PC-9 (cell line): ENCODE measurements at regions of chr11 and their contacts with region 1.

Region 1: GRCh38 chr11:107252429-107253161 is 205.0 kb downstream of the CWF19L2 start:
- DNase-seq: no peak
- H3K4me3 ChIP-seq: no peak overlapping the region
- H3K27ac ChIP-seq: no peak overlapping the region
- H3K4me1 ChIP-seq: no peaks in the 10 kb centered on the region
- H3K27me3 ChIP-seq: no peaks in the 10 kb centered on the region
- CTCF ChIP-seq: no peak

Region 2: GRCh38 chr11:107011977-107012376 is 240.6 kb before region 1 on chr11:
- CTCF ChIA-PET with region 1: no interaction called
- POLR2A ChIA-PET with region 1: no interaction called
- intact Hi-C with region 1: no loop called
- DNase-seq: no peak
- H3K4me3 ChIP-seq: no peak overlapping the region
- H3K27ac ChIP-seq: no peak overlapping the region
- H3K4me1 ChIP-seq: peaks cover 17% of the 10 kb centered on the region
- H3K27me3 ChIP-seq: peaks cover 7% of the 10 kb centered on the region; the same call in 1 of the 2 replicates
- CTCF ChIP-seq: no peak

Region 3: DNA sequence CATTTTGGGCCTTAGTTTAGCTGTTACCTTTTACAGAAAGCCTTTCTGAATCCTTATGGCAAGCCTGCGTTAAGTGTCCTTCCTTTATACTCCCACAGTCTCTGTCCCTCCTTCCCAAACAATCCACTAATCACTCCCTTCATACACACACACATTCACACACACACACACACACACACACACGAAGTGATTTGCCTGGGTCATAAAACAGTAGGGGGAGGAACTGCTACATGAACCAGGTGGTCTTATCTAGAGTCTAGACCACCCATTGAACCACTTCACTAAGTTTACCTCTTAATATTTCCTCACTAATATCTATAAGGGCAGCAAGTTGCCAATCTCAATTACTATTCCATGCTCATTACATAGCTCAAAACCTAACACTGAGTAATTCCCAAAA is 37.6 kb before region 1 on chr11:
- CTCF ChIA-PET with region 1: no interaction called
- POLR2A ChIA-PET with region 1: no interaction called
- intact Hi-C with region 1: no loop called
- DNase-seq: no peak
- H3K4me3 ChIP-seq: no peak overlapping the region
- H3K27ac ChIP-seq: no peak overlapping the region
- H3K4me1 ChIP-seq: no peaks in the 10 kb centered on the region
- H3K27me3 ChIP-seq: no peaks in the 10 kb centered on the region
- CTCF ChIP-seq: no peak

Region 4: DNA sequence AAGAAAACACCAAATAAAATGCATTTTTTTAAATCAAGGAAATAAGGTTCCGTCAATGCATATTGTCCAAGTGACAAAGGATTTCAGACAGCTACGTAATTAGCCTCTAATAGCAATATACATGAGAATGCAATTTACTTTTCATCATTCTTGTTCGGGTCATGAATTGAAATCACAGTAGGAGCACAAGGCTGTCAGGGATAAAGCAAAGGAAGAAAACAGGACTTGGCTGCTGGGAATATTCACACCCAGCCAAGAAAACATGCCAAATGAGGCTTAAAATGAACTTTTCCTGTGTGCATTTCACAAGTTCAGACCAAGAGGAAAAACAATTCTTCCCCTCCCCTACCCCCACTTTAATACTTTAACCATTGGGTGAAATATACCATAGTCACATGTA is 16.4 kb after region 1 on chr11:
- CTCF ChIA-PET with region 1: no interaction called
- POLR2A ChIA-PET with region 1: no interaction called
- intact Hi-C with region 1: no loop called
- DNase-seq: no peak
- H3K4me3 ChIP-seq: no peak overlapping the region
- H3K27ac ChIP-seq: no peak overlapping the region
- H3K4me1 ChIP-seq: no peaks in the 10 kb centered on the region
- H3K27me3 ChIP-seq: 0 out of 2 replicates have a peak, but pooled peaks cover 5% of the 10 kb centered on the region
- CTCF ChIP-seq: no peak

Region 5: DNA sequence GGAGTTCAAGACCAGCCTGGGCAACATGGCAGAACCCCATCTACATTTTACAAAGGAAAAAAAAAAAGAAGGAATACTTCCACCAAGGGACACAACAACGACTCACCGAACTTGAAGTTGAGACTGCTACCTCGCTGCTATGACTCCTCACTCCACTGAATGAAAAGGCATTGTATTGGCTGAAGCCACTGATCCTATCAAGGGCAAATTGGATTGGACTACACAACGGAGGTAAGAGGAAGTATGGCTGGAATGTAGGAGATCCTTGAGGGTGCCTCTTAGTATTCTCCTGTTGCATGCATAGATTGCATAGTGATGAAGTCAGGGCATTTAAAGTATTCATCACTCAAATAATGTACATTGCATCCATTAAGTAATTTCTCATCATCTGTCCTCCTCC is 107.1 kb after region 1 on chr11:
- CTCF ChIA-PET with region 1: no interaction called
- POLR2A ChIA-PET with region 1: no interaction called
- intact Hi-C with region 1: no loop called
- DNase-seq: no peak
- H3K4me3 ChIP-seq: no peak overlapping the region
- H3K27ac ChIP-seq: no peak overlapping the region
- H3K4me1 ChIP-seq: no peaks in the 10 kb centered on the region
- H3K27me3 ChIP-seq: no peaks in the 10 kb centered on the region
- CTCF ChIP-seq: no peak

Region 6: GRCh38 chr11:107505647-107506225 is 253.1 kb after region 1 on chr11:
- CTCF ChIA-PET with region 1: interaction called, 19 read pairs
- POLR2A ChIA-PET with region 1: no interaction called
- intact Hi-C with region 1: no loop called
- DNase-seq: no peak
- H3K4me3 ChIP-seq: no peak overlapping the region
- H3K27ac ChIP-seq: no peak overlapping the region
- H3K4me1 ChIP-seq: no peaks in the 10 kb centered on the region
- H3K27me3 ChIP-seq: no peaks in the 10 kb centered on the region
- CTCF ChIP-seq: no peak